CD14-positive monocyte (primary cell): ENCODE measurements at regions of chr2 and their contacts with region 1.

Region 1: DNA sequence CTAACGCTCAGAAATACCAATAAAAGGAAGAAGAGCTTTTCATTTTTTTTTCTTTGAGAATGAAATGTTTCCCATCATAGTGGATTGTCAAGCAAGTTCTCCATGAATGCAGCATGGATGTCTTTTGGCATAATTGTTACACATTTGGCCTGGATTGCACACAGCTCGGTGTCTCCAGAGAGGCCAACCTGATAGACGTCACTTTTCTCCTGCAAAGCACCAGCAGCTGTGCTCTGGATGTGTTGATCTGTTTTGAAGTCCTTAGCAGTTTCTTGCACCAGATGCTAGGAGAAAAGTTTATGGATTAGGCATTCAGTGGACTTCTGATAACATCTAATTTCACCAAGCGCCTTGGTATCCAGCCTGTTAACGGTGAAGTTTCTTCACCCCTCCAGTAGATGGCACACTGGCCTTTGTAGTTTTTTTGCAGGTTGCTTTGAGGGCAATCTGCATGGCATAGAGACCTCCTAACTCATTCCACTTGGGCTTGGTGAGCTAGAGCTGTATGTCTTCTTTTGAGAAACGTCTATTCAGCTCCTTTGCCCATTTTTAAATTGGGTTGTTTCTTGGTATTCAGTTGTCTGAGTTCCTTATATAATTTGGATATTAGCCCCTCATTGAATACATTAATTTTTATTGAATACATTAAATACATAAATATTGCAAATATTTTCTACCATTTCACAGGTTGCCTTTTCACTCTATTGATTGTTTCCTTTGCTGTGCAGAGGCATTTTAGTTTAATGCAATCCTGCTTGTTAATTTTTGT is 59.7 kb downstream of the PTH2R start:
- DNase-seq: peak in 1 of 3 donors; percentile 9
- H3K4me3 ChIP-seq: no peak overlapping the region
- H3K4me3 Mint-ChIP-seq: no peak overlapping the region
- H3K27ac ChIP-seq: no peak overlapping the region
- H3K27ac Mint-ChIP-seq: no peak overlapping the region
- H3K4me1 ChIP-seq: no peaks in the 10 kb centered on the region
- H3K4me1 Mint-ChIP-seq: no peaks in the 10 kb centered on the region
- H3K27me3 ChIP-seq: no peaks in the 10 kb centered on the region
- H3K27me3 Mint-ChIP-seq: peaks cover 2 to 5% (median 3%) of the 10 kb centered on the region in 3 donors
- CTCF ChIP-seq: peak; percentile 71

Region 2: DNA sequence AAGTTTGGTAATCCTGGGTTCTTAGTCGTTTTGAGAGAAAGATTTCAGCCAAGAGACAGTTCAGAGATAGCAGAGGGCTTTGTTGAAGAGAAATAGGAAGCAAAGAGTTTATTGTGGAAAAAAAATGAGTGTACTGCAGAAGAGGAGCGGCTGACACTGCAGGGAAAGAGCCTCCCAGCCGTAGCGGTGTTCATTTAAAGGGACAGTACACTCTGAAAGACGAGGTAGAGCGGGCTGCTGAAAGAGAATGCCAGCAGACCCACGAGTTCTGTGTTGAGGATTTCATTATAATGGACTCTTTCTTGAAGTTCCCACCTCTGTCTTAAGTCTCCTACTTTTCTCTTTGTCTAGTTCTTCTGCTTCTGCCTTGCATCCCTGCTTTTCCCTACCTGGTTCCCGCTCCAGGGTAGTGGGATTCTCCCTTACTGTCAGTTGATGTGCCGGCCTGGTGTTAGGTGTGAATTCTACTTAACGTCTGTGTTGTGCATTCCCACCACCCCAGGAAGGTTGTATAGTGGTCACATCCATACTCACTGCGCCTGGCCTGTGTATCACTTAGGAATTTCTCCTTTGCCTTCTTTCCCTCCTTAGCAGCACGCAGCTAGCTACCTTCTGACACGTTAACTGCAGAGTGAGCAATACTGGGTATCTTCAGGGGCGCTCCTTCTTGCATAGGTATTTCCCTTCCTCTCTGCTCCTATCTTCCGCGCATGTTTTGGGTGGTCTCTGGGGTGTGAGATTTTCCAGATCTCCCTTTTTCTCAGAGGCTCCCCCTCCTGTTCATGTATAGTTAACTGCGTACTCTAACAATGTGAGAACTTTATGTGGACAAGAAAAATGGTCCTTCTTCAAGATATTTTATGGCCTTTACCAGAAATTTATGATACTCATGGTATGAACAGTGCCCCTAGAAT is 104.8 kb after region 1 on chr2:
- intact Hi-C with region 1: no loop called
- DNase-seq: no peak
- H3K4me3 ChIP-seq: no peak overlapping the region
- H3K4me3 Mint-ChIP-seq: no peak overlapping the region
- H3K27ac ChIP-seq: no peak overlapping the region
- H3K27ac Mint-ChIP-seq: no peak overlapping the region
- H3K4me1 ChIP-seq: no peaks in the 10 kb centered on the region
- H3K4me1 Mint-ChIP-seq: no peaks in the 10 kb centered on the region
- H3K27me3 ChIP-seq: no peaks in the 10 kb centered on the region
- H3K27me3 Mint-ChIP-seq: peaks cover 2 to 5% (median 2%) of the 10 kb centered on the region in 3 donors
- CTCF ChIP-seq: no peak

Region 3: GRCh38 chr2:209209943-209210342 is 743.6 kb after region 1 on chr2:
- intact Hi-C with region 1: loop called in 1 of 2 experiments (anchors 5 kb)
- DNase-seq: no peak
- H3K4me3 ChIP-seq: no peak overlapping the region
- H3K4me3 Mint-ChIP-seq: no peak overlapping the region
- H3K27ac ChIP-seq: no peak overlapping the region
- H3K27ac Mint-ChIP-seq: no peak overlapping the region
- H3K4me1 ChIP-seq: no peaks in the 10 kb centered on the region
- H3K4me1 Mint-ChIP-seq: peaks cover 9% of the 10 kb centered on the region
- H3K27me3 ChIP-seq: no peaks in the 10 kb centered on the region
- H3K27me3 Mint-ChIP-seq: peaks cover 3% of the 10 kb centered on the region in 3 donors
- CTCF ChIP-seq: no peak